CD14-positive monocyte (primary cell): ENCODE measurements at regions of chr3 and their contacts with region 1.

Region 1: DNA sequence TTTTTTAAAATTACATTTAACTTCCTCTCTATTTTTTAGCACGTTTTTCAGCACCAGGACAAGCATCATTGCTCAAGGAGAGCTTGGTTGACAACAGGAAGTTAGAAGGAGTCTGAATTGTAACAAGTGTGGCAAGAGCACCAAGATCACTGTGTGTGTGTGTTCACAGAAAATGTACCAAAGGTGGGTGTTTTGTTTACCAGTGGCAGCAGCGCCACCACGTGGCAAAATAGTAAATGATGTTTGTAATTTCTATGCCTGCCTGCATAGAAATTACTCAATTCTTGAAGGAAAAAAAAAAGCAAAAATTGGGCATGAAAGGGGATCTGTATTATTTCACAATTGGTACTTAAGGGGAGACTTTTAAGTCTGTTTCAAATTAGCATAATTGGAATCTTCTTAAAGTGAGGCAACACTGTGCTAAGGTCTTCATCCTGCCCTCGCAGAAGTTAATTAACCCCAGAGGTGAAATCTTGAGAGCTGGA is 7.4 kb upstream of the U2SURP start:
- DNase-seq: peak; percentile 68 to 84 (median 80)
- H3K4me3 ChIP-seq: no peak overlapping the region
- H3K4me3 Mint-ChIP-seq: no peak overlapping the region
- H3K27ac ChIP-seq: no peak overlapping the region
- H3K27ac Mint-ChIP-seq: peak overlapping the region in 3 of 7 donors; percentile 28 to 50 (median 43)
- H3K4me1 ChIP-seq: peaks cover 17 to 19% of the 10 kb centered on the region in 2 donors
- H3K4me1 Mint-ChIP-seq: peaks cover 19% of the 10 kb centered on the region
- H3K27me3 ChIP-seq: no peaks in the 10 kb centered on the region
- H3K27me3 Mint-ChIP-seq: peaks cover 1 to 3% (median 2%) of the 10 kb centered on the region in 3 donors
- CTCF ChIP-seq: peak; percentile 90

Region 2: GRCh38 chr3:141686466-141687291 is 1307.3 kb before region 1 on chr3:
- intact Hi-C with region 1: no loop called
- DNase-seq: peak; percentile 40 to 71 (median 54)
- H3K4me3 ChIP-seq: peak overlapping the region; percentile 26 to 73 (median 50)
- H3K4me3 Mint-ChIP-seq: peak overlapping the region; percentile 81 to 95
- H3K27ac ChIP-seq: peak overlapping the region; percentile 31 to 90
- H3K27ac Mint-ChIP-seq: peak overlapping the region; percentile 87 to 98 (median 94)
- H3K4me1 ChIP-seq: peaks cover 50 to 72% of the 10 kb centered on the region in 2 donors
- H3K4me1 Mint-ChIP-seq: peaks cover 41% of the 10 kb centered on the region
- H3K27me3 ChIP-seq: no peaks in the 10 kb centered on the region
- H3K27me3 Mint-ChIP-seq: peaks cover 0 to 2% (median 0%) of the 10 kb centered on the region in 3 donors
- CTCF ChIP-seq: no peak

Region 3: DNA sequence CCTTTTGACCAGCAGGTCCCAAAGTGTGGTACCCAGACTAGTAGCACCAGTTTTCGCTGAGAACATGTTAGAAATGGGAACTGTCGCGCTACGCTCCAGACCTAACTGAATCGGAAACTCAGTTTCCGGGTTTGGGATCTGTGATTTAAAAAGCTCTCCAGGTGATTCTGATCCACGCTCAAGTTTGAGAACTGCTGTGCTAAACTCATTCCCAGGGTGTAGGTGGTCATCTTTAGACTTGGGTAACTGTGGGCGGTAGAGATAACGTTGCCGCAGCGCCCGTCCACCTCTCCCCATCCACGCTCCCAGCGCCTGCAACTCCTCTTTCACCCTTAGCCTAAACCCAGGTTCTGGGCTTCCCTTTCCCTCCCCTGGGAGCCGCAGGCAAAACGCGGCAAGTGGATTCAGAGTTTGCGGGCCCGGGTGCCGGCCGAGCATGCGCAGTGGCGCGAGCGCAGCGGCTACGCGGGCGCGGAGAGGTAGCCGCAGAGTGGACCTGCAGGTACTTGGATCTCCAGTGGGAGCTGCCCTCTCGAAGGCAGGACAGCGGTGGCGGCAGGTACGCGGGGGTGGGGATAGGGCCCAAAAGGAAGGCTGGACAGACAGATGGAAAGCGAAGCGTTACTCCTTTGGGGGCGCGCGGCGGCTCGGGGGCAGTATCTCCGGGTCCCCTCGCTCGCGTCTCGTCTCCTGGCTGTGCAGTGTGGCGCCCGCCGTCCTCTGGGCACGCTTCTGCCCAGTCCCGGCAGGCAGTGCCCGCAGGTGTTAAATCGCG is 397.9 kb before region 1 on chr3 and contains the start of gene PLS1:
- intact Hi-C with region 1: loop called in 1 of 2 experiments (anchors 5 kb)
- DNase-seq: peak; percentile 80 to 84 (median 82)
- H3K4me3 ChIP-seq: peak within 1 kb of the TSS; percentile 62 to 86 (median 70)
- H3K4me3 Mint-ChIP-seq: peak within 1 kb of the TSS; percentile 99 to 100
- H3K27ac ChIP-seq: peak within 1 kb of the TSS; percentile 45 to 71
- H3K27ac Mint-ChIP-seq: peak within 1 kb of the TSS; percentile 87 to 98 (median 95)
- H3K4me1 ChIP-seq: peaks cover 14 to 16% of the 10 kb centered on the region in 2 donors
- H3K4me1 Mint-ChIP-seq: peaks cover 17% of the 10 kb centered on the region
- H3K27me3 ChIP-seq: peaks cover 0 to 4% of the 10 kb centered on the region in 2 donors
- H3K27me3 Mint-ChIP-seq: peaks cover 7 to 8% (median 7%) of the 10 kb centered on the region in 3 donors
- CTCF ChIP-seq: no peak
- polyA plus RNA-seq, gene PLS1: 0.09 to 0.17 TPM in 2 of 3 donors, not detected in the other

Region 4: GRCh38 chr3:142828703-142829305 is 165.2 kb before region 1 on chr3:
- intact Hi-C with region 1: loop called (anchors 5 to 10 kb)
- DNase-seq: peak; percentile 33 to 58 (median 54)
- H3K4me3 ChIP-seq: no peak overlapping the region
- H3K4me3 Mint-ChIP-seq: no peak overlapping the region
- H3K27ac ChIP-seq: no peak overlapping the region
- H3K27ac Mint-ChIP-seq: no peak overlapping the region
- H3K4me1 ChIP-seq: no peaks in the 10 kb centered on the region
- H3K4me1 Mint-ChIP-seq: no peaks in the 10 kb centered on the region
- H3K27me3 ChIP-seq: no peaks in the 10 kb centered on the region
- H3K27me3 Mint-ChIP-seq: peaks cover 0 to 2% (median 2%) of the 10 kb centered on the region in 3 donors
- CTCF ChIP-seq: peak; percentile 88

Region 5: GRCh38 chr3:142875583-142876207 is 118.3 kb before region 1 on chr3:
- intact Hi-C with region 1: no loop called
- DNase-seq: no peak
- H3K4me3 ChIP-seq: no peak overlapping the region
- H3K4me3 Mint-ChIP-seq: no peak overlapping the region
- H3K27ac ChIP-seq: no peak overlapping the region
- H3K27ac Mint-ChIP-seq: peak overlapping the region in 1 of 7 donors; percentile 4
- H3K4me1 ChIP-seq: no peaks in the 10 kb centered on the region
- H3K4me1 Mint-ChIP-seq: peaks cover 2% of the 10 kb centered on the region
- H3K27me3 ChIP-seq: no peaks in the 10 kb centered on the region
- H3K27me3 Mint-ChIP-seq: no peaks in the 10 kb centered on the region
- CTCF ChIP-seq: no peak

Region 6: DNA sequence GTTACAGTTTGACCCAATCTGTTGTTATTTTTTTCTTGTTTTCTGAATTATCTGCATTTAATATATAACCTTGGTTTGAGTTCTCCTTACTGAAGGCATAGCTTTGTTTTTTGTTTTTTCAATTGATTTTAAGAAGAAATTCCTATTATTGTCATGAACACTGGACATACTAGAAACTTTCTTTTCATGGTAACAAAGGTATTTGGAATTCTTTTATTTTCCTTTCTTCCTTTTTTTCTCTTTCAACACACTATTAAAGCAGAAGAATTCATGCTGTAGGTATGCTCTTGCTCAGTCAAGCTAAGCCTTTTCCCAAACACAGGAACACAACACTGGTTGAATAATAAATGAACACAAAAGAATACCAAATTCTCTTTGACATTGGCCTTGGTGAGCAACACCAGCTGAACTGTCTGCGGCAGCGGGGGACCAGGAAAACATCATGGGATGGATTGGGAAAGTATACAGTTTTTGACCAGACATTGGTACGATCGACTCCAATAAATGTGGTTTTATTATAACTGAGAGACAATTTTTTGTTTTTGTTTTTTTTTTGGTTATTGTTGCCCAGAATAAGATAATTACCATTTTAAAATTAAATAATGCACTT is 30.5 kb after region 1 on chr3:
- intact Hi-C with region 1: no loop called
- DNase-seq: no peak
- H3K4me3 ChIP-seq: no peak overlapping the region
- H3K4me3 Mint-ChIP-seq: no peak overlapping the region
- H3K27ac ChIP-seq: no peak overlapping the region
- H3K27ac Mint-ChIP-seq: no peak overlapping the region
- H3K4me1 ChIP-seq: no peaks in the 10 kb centered on the region
- H3K4me1 Mint-ChIP-seq: no peaks in the 10 kb centered on the region
- H3K27me3 ChIP-seq: no peaks in the 10 kb centered on the region
- H3K27me3 Mint-ChIP-seq: no peaks in the 10 kb centered on the region
- CTCF ChIP-seq: no peak